ENCODE measurements at regions of chr3 and their contacts with region 1.

Region 1: DNA sequence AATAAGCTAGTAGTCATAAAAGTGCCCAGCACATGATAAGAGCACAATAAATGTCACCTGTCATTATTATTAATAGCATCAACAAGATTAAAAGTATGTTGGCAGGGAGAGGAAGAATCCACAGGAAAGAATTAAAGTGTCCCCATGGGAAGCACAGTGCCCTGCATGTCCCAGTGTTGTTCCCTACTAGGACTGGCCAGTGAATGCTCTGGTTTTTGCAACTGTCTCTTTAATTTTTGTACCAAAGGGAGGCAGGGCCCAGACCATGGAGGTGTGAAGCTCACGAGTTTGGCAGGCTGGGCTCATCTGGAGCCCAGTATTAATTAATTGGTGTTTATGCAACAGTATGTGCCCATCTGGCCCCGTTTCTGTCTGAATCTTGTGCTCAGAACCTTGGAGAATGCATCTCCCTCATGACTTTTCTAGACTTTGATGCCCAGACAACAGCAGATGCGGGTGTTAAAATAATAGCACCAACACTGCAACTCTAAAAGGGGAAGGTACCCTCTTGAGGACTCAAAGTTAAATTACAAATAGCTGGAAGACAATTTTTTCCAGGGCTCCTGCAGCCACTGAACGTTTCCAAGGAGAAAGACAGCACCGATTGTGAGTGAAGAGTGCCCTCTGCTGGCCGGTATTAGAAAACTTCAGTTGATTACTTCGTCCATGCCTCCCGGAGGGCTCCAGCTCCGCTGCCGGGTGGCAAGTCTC is 71.9 kb upstream of the SPATA12 start:
- DNase-seq: peak; percentile 45
- ATAC-seq: peak; percentile 61
- H3K4me3 Mint-ChIP-seq: no peak overlapping the region
- H3K27ac Mint-ChIP-seq: no peak overlapping the region
- H3K4me1 Mint-ChIP-seq: peaks cover 3% of the 10 kb centered on the region
- H3K27me3 Mint-ChIP-seq: peaks cover 12% of the 10 kb centered on the region
- CTCF ChIP-seq: peak; percentile 82

Region 2: GRCh38 chr3:56702490-56703315 is 285.9 kb before region 1 on chr3:
- CTCF ChIA-PET with region 1: interaction called, 214 read pairs
- POLR2A ChIA-PET with region 1: interaction called, 10 read pairs
- intact Hi-C with region 1: loop called (anchors 1 kb)
- DNase-seq: no peak
- ATAC-seq: peak; percentile 71
- H3K4me3 Mint-ChIP-seq: no peak overlapping the region
- H3K27ac Mint-ChIP-seq: no peak overlapping the region
- H3K4me1 Mint-ChIP-seq: peaks cover 12% of the 10 kb centered on the region
- H3K27me3 Mint-ChIP-seq: no peaks in the 10 kb centered on the region
- CTCF ChIP-seq: peak; percentile 53

Region 3: DNA sequence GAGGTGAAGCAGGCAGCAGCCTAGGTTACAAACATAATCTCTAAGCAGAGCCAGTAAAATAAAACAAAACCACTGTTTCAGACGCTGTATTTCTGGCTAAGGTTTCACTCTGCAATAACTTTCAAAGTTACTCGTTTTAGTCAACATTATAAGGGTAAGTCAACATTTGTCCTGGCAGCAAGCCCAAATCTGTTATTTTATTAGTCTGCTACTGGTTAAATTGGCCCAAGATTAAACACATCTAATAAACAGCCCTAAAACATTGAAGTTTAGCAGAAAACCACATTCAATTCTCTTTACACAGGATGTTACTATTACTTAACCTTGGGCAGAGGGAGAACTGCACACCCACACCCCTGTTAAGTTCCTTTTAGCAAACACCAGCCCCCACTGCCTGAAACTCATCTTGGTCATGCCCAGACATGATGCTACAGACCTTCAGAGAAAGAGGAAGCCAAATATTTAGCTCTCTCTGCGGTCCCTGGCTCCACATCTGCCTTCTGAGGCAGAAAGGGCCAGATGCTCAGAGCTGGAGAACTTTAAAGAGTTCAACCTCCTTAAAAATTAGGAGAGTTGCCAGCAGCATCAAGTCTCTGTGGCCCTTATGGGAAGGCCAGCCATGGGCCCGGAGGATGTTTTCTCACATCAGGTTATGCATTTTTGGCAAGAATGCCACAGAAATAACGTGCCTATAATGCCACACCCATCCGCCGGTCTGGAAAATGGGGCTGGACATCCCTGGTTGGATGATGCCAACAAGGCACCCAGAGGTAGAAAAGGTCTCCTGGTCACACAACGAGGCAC is 204.8 kb before region 1 on chr3:
- CTCF ChIA-PET with region 1: interaction called, 11 read pairs
- POLR2A ChIA-PET with region 1: no interaction called
- intact Hi-C with region 1: no loop called
- DNase-seq: peak; percentile 40
- ATAC-seq: peak; percentile 99
- H3K4me3 Mint-ChIP-seq: peak overlapping the region; percentile 32
- H3K27ac Mint-ChIP-seq: peak overlapping the region; percentile 92
- H3K4me1 Mint-ChIP-seq: peaks cover 88% of the 10 kb centered on the region
- H3K27me3 Mint-ChIP-seq: no peaks in the 10 kb centered on the region
- CTCF ChIP-seq: no peak

Region 4: GRCh38 chr3:56855856-56856512 is 132.6 kb before region 1 on chr3:
- CTCF ChIA-PET with region 1: interaction called, 9 read pairs
- POLR2A ChIA-PET with region 1: no interaction called
- intact Hi-C with region 1: loop called (anchors 1 kb)
- DNase-seq: peak; percentile 17
- ATAC-seq: peak; percentile 28
- H3K4me3 Mint-ChIP-seq: peak overlapping the region; percentile 16
- H3K27ac Mint-ChIP-seq: no peak overlapping the region
- H3K4me1 Mint-ChIP-seq: peaks cover 3% of the 10 kb centered on the region
- H3K27me3 Mint-ChIP-seq: no peaks in the 10 kb centered on the region
- CTCF ChIP-seq: no peak

Region 5: DNA sequence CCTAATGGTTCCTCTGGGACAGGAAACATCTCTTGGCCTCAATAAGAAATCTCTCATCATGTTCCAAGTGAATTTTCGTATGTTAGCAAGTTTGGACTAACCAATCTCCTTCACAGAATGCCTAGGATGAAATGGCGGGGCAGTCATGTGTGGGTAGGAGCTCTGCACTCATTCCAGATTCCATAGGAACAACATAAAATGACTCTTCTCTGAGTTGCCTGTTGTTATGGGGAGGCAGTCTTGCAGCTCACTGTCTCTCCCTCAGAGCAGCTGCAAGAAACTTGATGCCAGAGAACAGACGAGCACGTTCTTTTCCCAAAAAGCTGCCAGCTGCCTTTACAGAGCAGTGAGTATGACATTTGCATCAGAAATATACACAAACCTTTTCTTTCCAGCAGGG is 106.0 kb after region 1 on chr3:
- CTCF ChIA-PET with region 1: no interaction called
- POLR2A ChIA-PET with region 1: no interaction called
- intact Hi-C with region 1: no loop called
- DNase-seq: no peak
- ATAC-seq: no peak
- H3K4me3 Mint-ChIP-seq: no peak overlapping the region
- H3K27ac Mint-ChIP-seq: no peak overlapping the region
- H3K4me1 Mint-ChIP-seq: peaks cover 4% of the 10 kb centered on the region
- H3K27me3 Mint-ChIP-seq: peaks cover 6% of the 10 kb centered on the region
- CTCF ChIP-seq: no peak

Measured in activated B cell treated with CpG ODN at 0.5 μM for 24 hours (primary cell).